ENCODE measurements at regions of chr11 and their contacts with region 1.

Region 1: GRCh38 chr11:77820563-77821348 is at the starts of genes AAMDC and RSF1:
- DNase-seq: peak; percentile 95
- ATAC-seq: peak; percentile 89
- H3K4me3 ChIP-seq: peak within 1 kb of the TSS; percentile 94
- H3K27ac ChIP-seq: peak within 1 kb of the TSS; percentile 90
- H3K4me1 ChIP-seq: peaks cover 27% of the 10 kb centered on the region
- H3K27me3 ChIP-seq: no peaks in the 10 kb centered on the region
- CTCF ChIP-seq: peak; percentile 95
- total RNA-seq, gene AAMDC: 52.7 TPM
- total RNA-seq, gene RSF1: 83.0 TPM

Region 2: DNA sequence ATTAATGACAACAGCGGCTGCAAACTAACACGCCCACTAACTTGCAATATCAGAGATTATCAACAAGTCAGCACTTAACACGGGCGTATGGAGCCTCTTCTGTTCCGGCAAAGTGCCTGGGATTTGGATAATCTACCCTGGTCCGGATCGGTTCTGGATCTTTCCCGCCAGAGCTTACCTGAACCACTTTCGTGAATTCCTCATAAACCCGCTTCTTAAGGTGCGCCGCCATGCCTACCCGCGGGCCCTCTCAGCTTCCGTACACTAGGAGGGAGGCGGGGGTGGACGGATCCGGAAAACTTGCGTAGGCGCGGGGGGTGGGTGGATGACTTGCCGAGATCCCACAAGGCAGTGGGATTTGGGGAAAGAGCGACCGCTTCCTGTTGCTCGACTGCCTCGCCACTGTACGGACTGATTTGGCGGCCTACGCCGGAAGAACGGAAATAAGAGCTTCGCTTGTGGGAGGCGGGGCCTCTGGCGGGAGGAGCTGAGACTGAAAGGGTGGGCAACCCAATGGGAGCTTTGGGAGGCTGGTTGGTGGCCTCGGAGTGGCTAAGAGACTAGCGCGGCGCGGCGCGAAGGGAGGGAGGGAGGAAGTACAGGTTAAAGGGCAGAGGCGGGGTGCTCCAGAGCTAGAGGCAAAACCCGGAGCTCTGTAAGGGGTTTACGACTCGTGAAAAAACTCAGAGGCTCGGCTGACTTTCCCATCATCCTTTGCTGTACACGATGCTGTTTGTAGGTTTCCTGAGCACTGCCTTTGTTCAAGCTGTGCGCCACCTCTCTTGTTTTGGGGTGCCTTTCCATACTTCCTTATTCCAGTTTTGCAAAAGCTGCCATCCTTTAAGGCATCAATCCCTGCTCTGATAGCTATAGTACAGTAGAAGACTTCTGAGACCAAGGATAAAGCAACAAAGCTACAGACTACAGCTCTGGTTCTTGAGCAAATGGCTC is 173.9 kb after region 1 on chr11 and contains the start of gene INTS4:
- CTCF ChIA-PET with region 1: interaction called, 3 read pairs
- POLR2A ChIA-PET with region 1: interaction called, 3 read pairs
- in situ Hi-C with region 1: no loop called
- intact Hi-C with region 1: loop called (anchors 2 kb)
- DNase-seq: peak; percentile 99
- ATAC-seq: peak; percentile 99
- H3K4me3 ChIP-seq: peak within 1 kb of the TSS; percentile 73 to 87
- H3K27ac ChIP-seq: peak within 1 kb of the TSS; percentile 99
- H3K4me1 ChIP-seq: peaks cover 13% of the 10 kb centered on the region; the same call in 1 of the 2 replicates
- H3K27me3 ChIP-seq: no peaks in the 10 kb centered on the region
- CTCF ChIP-seq: no peak
- total RNA-seq, gene INTS4: 48.2 TPM

Region 3: DNA sequence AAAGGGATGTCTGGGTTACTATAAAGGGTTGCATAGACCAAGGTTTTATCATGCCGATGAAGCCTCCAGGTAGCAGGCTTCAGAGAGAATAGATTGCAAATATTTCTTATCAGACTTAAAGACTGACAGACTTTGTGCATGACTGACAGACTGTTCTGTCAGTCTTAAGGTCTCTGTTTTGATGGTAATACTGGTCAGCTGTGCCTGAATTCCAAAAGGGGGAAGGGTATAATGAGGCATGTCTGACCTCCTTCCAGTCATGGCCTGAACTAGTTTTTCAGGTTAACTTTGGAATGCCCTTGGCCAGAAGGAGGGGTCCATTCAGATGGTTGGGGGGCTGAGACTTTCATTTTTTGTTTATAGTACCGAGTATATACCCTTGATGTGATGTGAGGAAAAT is 207.0 kb after region 1 on chr11:
- CTCF ChIA-PET with region 1: no interaction called
- POLR2A ChIA-PET with region 1: interaction called, 13 read pairs
- in situ Hi-C with region 1: no loop called
- intact Hi-C with region 1: no loop called
- DNase-seq: no peak
- ATAC-seq: no peak
- H3K4me3 ChIP-seq: no peak overlapping the region
- H3K27ac ChIP-seq: no peak overlapping the region
- H3K4me1 ChIP-seq: peaks cover 10% of the 10 kb centered on the region; the same call in 1 of the 2 replicates
- H3K27me3 ChIP-seq: no peaks in the 10 kb centered on the region
- CTCF ChIP-seq: no peak

Region 4: DNA sequence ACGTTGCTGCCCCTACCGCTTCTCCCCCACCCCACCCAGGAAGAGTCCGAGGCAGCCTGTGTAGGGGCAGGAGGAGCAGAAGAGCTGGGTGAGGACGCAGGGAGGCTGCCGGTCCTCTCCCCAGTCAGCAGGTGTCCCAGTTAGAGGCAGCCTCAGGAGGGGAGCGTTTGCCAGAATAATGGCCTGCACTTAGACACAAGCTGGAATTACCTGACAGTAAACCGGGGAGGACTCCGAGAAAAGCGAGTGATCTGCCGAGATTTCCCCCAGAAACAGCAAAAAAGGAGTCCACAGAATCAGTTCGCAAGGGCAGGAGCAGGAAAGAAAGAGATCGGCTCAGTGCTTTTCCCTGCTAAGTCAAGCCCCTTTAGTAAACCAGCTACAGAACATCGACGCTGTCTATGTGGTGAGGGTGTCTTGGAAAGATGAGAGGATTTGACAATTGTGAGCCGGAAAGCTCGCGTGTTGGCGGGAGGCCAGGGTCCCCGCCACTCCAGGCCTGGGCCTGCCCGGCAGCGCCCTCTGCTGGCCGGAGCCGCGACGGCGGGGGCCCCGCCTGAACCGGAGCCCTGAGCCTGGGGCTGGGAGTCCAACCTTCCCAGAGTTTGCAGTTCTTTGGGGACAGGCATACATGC is 225.2 kb after region 1 on chr11:
- CTCF ChIA-PET with region 1: no interaction called
- POLR2A ChIA-PET with region 1: no interaction called
- in situ Hi-C with region 1: no loop called
- intact Hi-C with region 1: loop called (anchors 5 kb)
- DNase-seq: no peak
- ATAC-seq: peak; percentile 96
- H3K4me3 ChIP-seq: peak overlapping the region; percentile 41 to 73
- H3K27ac ChIP-seq: peak overlapping the region; percentile 79; the same call in 1 of the 2 replicates
- H3K4me1 ChIP-seq: peaks cover 5% of the 10 kb centered on the region; the same call in 1 of the 2 replicates
- H3K27me3 ChIP-seq: no peaks in the 10 kb centered on the region
- CTCF ChIP-seq: peak; percentile 100

Measured in Panc1 (cell line).